Activated T-helper 1 cell treated with anti-CD3 and anti-CD28 coated beads, Interleukin-12 subunit alpha, Interleukin-12 subunit beta, Interleukin-2, Interleukin-4 antibody, amounts not matched to agents 30 ng/mL and 10 ng/mL and 1 ng/mL, durations not matched to agents 14 hours and 24 hours and 36 hours (primary cell): ENCODE measurements at regions of chr9 and their contacts with region 1.

Region 1: DNA sequence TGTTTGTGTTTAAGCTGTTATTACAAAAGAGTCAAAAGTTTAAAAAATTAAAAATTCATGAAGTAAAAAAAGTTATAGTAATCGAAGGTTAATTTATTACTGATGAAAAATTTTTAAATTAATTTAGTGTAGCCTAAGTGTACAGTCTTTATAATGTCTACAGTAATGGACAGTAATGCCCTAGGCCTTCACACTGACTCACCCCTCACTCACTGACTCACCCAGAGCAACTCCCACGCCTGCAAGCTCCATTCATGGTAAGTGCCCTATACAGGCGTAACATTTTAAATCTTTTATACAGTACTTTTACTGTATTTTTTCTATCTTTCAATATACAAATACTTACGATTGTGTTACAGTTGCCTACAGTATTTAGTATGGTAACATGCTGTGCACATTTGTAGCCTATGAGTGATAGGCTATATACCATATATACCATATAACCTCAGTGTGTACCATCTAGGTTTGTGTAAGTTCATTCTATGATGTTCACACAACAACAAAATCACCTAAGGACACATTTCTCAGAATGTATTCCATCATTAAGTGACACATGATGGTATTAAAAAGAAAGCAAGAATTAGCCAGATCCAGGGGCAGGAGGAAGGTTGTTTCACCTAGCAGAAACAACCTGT is 40.1 kb downstream of the DCAF10 start:
- DNase-seq: no peak
- H3K4me3 Mint-ChIP-seq: no peak overlapping the region
- H3K27ac Mint-ChIP-seq: no peak overlapping the region
- H3K4me1 Mint-ChIP-seq: peaks cover 11% of the 10 kb centered on the region
- H3K27me3 Mint-ChIP-seq: no peaks in the 10 kb centered on the region

Region 2: GRCh38 chr9:37746848-37747753 is 93.6 kb before region 1 on chr9:
- intact Hi-C with region 1: loop called (anchors 5 kb)
- DNase-seq: peak; percentile 24
- H3K4me3 Mint-ChIP-seq: no peak overlapping the region
- H3K27ac Mint-ChIP-seq: no peak overlapping the region
- H3K4me1 Mint-ChIP-seq: no peaks in the 10 kb centered on the region
- H3K27me3 Mint-ChIP-seq: peaks cover 6% of the 10 kb centered on the region